ENCODE measurements at regions of chr10 and their contacts with region 1.

Region 1: DNA sequence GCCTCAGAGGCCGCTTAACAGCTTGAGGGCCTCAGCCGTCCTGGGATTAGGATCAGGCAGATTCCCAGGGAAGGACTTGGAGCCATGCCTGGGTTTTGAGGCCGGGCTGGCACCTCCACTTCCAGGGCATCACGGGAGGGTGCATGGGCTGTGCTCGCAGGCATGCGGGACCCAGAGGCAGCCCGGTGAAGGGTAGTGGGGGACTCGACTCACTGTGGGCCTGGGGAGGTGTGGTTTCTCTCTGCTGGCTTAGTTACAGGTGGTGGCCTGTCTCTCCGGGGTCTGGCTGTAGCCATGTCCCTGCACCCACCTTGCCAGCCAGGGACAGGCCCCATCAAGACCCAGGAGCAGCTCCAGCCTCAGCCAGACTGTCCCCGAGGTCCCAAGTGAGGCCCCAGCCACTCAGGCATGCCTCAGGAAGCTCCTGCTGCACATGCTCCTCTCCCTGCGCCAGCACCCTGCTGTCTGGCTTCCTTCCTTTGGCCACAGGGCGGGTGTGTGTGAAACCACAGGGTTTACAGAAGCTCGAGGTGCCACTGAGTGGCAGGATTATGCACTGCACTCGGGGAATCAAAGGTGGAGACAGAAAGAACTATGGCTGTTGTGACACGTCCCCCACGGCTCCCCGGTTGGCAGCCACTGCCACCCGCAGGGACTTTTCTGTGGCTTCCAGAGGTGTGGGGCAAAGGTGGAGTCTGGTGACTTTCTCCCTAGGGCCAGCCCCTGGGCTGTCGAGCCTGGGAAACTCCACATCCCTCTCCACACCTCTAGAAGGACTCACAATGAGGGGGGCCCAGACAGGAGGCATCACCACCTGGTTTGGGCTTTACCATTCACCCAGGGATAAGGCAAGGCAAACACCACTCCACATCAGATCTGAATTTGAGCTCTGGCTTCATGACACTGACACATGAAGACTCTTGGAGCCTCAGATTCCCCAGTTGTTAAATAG is 19.7 kb downstream of the GOLGA7B start:
- DNase-seq: peak; percentile 74
- H3K4me3 ChIP-seq: no peak overlapping the region
- H3K27ac ChIP-seq: no peak overlapping the region
- H3K4me1 ChIP-seq: no peaks in the 10 kb centered on the region
- H3K27me3 ChIP-seq: no peaks in the 10 kb centered on the region
- CTCF ChIP-seq: peak; percentile 73

Region 2: GRCh38 chr10:97762816-97763215 is 106.6 kb before region 1 on chr10:
- intact Hi-C with region 1: loop called (anchors 10 kb)
- DNase-seq: no peak
- H3K4me3 ChIP-seq: no peak overlapping the region
- H3K27ac ChIP-seq: no peak overlapping the region
- H3K4me1 ChIP-seq: no peaks in the 10 kb centered on the region
- H3K27me3 ChIP-seq: no peaks in the 10 kb centered on the region
- CTCF ChIP-seq: no peak

Region 3: DNA sequence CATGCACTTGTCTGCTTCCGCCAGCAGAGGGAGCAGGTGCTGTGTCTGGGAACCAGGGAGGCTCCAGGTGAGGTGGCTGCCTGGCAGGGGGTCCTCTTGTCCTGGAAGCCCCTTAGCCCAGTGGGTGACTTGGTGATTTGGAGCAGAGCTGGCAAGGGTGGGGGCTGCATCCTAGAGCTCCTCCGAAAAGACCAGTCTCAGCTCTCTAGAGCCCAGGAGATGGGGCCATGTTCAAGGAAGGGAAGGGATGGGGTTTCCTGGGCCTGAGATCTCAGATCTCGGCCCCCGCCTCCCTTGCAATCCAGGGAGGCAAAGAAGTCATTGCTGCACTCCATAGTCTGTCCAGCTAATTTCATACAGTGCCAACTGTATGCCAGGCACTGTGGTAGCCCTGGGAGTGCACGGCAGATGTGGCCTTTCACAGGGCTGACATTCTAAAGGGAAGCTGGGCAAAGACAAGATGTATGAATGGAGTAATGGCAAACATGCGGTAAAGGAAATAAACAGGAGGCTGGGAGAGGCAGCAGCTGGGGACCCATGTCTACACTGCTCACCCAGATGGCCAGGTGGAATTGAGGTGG is 77.1 kb before region 1 on chr10:
- intact Hi-C with region 1: loop called (anchors 2 kb)
- DNase-seq: peak; percentile 76
- H3K4me3 ChIP-seq: no peak overlapping the region
- H3K27ac ChIP-seq: no peak overlapping the region
- H3K4me1 ChIP-seq: no peaks in the 10 kb centered on the region
- H3K27me3 ChIP-seq: no peaks in the 10 kb centered on the region
- CTCF ChIP-seq: peak; percentile 54

Region 4: GRCh38 chr10:98134431-98135221 is 265.3 kb after region 1 on chr10 and contains the start of gene R3HCC1L:
- intact Hi-C with region 1: no loop called
- DNase-seq: peak; percentile 95
- H3K4me3 ChIP-seq: peak within 1 kb of the TSS; percentile 97
- H3K27ac ChIP-seq: peak within 1 kb of the TSS; percentile 92
- H3K4me1 ChIP-seq: peaks cover 10% of the 10 kb centered on the region
- H3K27me3 ChIP-seq: no peaks in the 10 kb centered on the region
- CTCF ChIP-seq: no peak
- total RNA-seq, gene R3HCC1L: 16.7 to 16.8 TPM

Measured in colonic mucosa (tissue), 4 donors.